ENCODE measurements at regions of chr20 and their contacts with region 1.

Region 1: GRCh38 chr20:20317195-20317594 is 50.7 kb upstream of the INSM1 start:
- DNase-seq: no peak
- ATAC-seq: peak in 4 of 8 donors; percentile 68 to 86 (median 74)
- H3K4me3 ChIP-seq: no peak overlapping the region
- H3K27ac ChIP-seq: peak overlapping the region in 1 of 10 donors; percentile 44
- H3K4me1 ChIP-seq: peaks cover 0 to 24% (median 3%) of the 10 kb centered on the region in 9 donors
- H3K27me3 ChIP-seq: no peaks in the 10 kb centered on the region
- CTCF ChIP-seq: no peak

Region 2: DNA sequence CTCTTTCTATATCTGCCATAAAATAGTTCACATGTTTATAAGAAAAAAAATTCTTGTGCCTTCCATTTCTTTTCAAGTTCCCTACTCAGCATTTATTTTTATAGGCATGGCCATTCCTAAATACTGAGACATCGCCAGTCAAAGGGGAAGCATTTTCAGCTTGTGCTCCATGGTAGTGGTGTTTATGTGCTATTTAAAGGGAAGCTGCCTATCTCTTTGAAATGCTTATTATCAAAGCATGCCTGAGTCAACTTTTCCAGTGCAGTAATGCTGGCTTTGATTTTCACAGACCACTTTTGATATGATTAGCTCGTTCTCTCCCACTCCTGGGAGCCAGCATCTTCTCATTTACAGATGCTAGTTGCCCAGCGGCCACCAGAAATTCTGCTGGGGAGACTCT is 683.2 kb before region 1 on chr20:
- intact Hi-C with region 1: loop called in 1 of 10 experiments (anchors 5 kb)
- DNase-seq: peak in 1 of 2 donors; percentile 19
- ATAC-seq: peak in 7 of 8 donors; percentile 11 to 98 (median 81)
- H3K4me3 ChIP-seq: no peak overlapping the region
- H3K27ac ChIP-seq: peak overlapping the region in 4 of 10 donors; percentile 54 to 61 (median 56)
- H3K4me1 ChIP-seq: peaks cover 0 to 13% (median 0%) of the 10 kb centered on the region in 9 donors
- H3K27me3 ChIP-seq: no peaks in the 10 kb centered on the region
- CTCF ChIP-seq: no peak

Region 3: GRCh38 chr20:19974626-19975435 is 342.4 kb before region 1 on chr20:
- intact Hi-C with region 1: no loop called
- DNase-seq: peak; percentile 85 to 93
- ATAC-seq: peak; percentile 73 to 93 (median 82)
- H3K4me3 ChIP-seq: peak overlapping the region; percentile 46 to 71 (median 59)
- H3K27ac ChIP-seq: peak overlapping the region; percentile 88 to 97 (median 93)
- H3K4me1 ChIP-seq: peaks cover 26 to 97% (median 74%) of the 10 kb centered on the region in 9 donors
- H3K27me3 ChIP-seq: no peaks in the 10 kb centered on the region
- CTCF ChIP-seq: peak in 1 of 9 donors; percentile 12

Measured in heart right ventricle (tissue), 16 donors.